H1 (cell line): ENCODE measurements at regions of chr9 and their contacts with region 1.

Region 1: DNA sequence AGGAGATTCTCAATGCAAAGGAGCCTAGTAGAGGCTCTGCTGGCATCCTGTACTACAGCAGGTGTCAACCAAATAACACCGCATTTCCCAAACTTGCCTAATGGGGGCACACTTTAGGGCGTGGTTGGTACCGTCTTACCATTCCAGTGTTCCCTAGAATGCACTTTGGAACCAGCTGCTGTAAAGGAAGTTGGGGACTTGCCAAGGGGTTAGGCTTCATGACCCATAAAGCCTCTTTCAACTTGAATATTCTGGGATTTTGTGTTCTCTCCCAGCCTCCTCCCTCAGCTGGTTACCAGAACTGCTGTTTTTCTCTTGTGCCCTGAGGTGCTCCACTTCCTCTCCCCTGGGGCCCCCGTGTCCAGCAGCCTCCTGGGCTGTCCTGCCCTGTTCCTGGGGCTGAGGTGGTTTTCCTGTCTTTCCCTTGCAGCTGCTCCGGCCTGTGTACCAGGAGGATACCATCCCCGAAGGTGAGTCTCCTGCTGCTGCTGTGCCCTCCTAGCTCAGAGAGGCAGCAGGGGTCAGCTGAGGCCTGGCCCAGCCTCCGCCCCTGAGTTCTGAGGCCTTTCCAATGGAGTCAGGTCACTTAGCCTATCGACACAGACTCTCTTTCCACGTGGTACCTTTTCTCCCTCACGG is 44.7 kb downstream of the RGS3 start:
- DNase-seq: peak in 1 of 2 experiments; percentile 83
- H3K4me3 ChIP-seq: no peak overlapping the region
- H3K27ac ChIP-seq: no peak overlapping the region
- H3K4me1 ChIP-seq: peaks cover 6 to 10% (median 8%) of the 10 kb centered on the region in 4 experiments
- H3K27me3 ChIP-seq: no peaks in the 10 kb centered on the region
- CTCF ChIP-seq: peak; percentile 45 to 70 (median 50)
- EP300 ChIP-seq: no peak
- POLR2A ChIP-seq: no peak
- RAD21 ChIP-seq: peak; percentile 34 to 58; a peak in 3 of 4 replicates

Region 2: GRCh38 chr9:113492343-113493212 is 15.7 kb before region 1 on chr9:
- CTCF ChIA-PET with region 1: interaction called, 18 read pairs
- POLR2A ChIA-PET with region 1: no interaction called
- DNase-seq: no peak
- H3K4me3 ChIP-seq: no peak overlapping the region
- H3K27ac ChIP-seq: no peak overlapping the region
- H3K4me1 ChIP-seq: peaks cover 0 to 7% (median 3%) of the 10 kb centered on the region in 4 experiments; a peak in 4 of 7 replicates
- H3K27me3 ChIP-seq: no peaks in the 10 kb centered on the region
- CTCF ChIP-seq: no peak
- EP300 ChIP-seq: no peak
- POLR2A ChIP-seq: no peak
- RAD21 ChIP-seq: no peak

Region 3: DNA sequence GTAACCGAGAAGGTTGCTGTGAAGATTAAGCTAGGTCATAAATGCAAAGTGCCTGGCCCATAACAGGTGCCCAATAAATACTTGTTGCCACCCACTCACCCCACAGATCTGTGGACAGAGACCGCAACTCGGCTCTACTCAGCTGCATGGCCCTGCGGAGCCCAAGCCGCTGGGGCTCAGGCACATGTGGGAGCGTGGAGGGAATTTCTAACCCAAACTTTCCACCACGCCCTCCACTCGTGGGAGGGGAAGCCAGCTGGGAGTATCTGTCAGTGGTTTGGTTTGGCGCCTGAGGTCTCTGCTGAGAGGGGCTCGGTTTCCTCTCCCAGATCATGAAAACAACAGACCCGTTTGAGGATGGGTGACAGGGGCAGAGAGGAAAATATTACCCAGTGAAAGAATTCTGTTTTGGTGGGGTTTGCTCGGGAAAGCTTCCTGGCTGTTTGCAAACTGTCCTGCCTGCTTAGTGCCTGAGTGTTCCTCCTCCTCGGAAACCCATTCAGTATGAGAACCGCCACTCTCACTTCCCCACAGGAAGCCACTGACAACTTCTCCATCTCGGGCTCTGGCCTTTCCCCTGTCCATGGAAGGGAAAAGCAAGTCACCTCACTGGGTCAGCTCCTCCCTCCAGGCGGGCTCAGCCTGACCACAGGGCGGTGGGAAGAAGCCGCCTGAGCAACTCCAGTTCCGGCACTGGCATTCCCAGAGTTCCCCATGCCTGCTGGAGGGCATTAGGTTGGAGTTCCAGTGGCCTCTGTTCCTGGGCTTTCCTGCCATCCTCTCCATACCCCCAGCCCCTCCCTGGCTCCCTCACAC is 15.4 kb after region 1 on chr9:
- CTCF ChIA-PET with region 1: interaction called, 67 read pairs
- POLR2A ChIA-PET with region 1: interaction called, 3 read pairs
- DNase-seq: no peak
- H3K4me3 ChIP-seq: no peak overlapping the region
- H3K27ac ChIP-seq: no peak overlapping the region
- H3K4me1 ChIP-seq: peaks cover 0 to 2% (median 0%) of the 10 kb centered on the region in 4 experiments; a peak in 1 of 7 replicates
- H3K27me3 ChIP-seq: no peaks in the 10 kb centered on the region
- CTCF ChIP-seq: no peak
- EP300 ChIP-seq: no peak
- POLR2A ChIP-seq: no peak
- RAD21 ChIP-seq: no peak

Region 4: GRCh38 chr9:113578882-113579282 is 70.7 kb after region 1 on chr9:
- CTCF ChIA-PET with region 1: interaction called, 17 read pairs
- POLR2A ChIA-PET with region 1: no interaction called
- DNase-seq: no peak
- H3K4me3 ChIP-seq: no peak overlapping the region
- H3K27ac ChIP-seq: no peak overlapping the region
- H3K4me1 ChIP-seq: peaks cover 0 to 14% (median 7%) of the 10 kb centered on the region in 4 experiments; a peak in 6 of 7 replicates
- H3K27me3 ChIP-seq: no peaks in the 10 kb centered on the region
- CTCF ChIP-seq: no peak
- EP300 ChIP-seq: no peak
- POLR2A ChIP-seq: no peak
- RAD21 ChIP-seq: no peak